Right cardiac atrium (tissue), 5 donors: ENCODE measurements at regions of chr17 and their contacts with region 1.

Region 1: GRCh38 chr17:50919321-50920085 is 53.3 kb upstream of the TOB1 start:
- DNase-seq: peak; percentile 90 to 95 (median 94)
- ATAC-seq: peak; percentile 92 to 95
- H3K4me3 ChIP-seq: no peak overlapping the region
- H3K27ac ChIP-seq: peak overlapping the region; percentile 18
- H3K4me1 ChIP-seq: peaks cover 4% of the 10 kb centered on the region
- H3K27me3 ChIP-seq: no peaks in the 10 kb centered on the region

Region 2: GRCh38 chr17:50719144-50719923 is 200.2 kb before region 1 on chr17 and contains the start of gene LUC7L3:
- intact Hi-C with region 1: no loop called
- DNase-seq: peak; percentile 94 to 98 (median 97)
- ATAC-seq: peak; percentile 98 to 99
- H3K4me3 ChIP-seq: peak within 1 kb of the TSS; percentile 86
- H3K27ac ChIP-seq: peak within 1 kb of the TSS; percentile 97
- H3K4me1 ChIP-seq: peaks cover 4% of the 10 kb centered on the region
- H3K27me3 ChIP-seq: no peaks in the 10 kb centered on the region
- total RNA-seq, gene LUC7L3: 61.7 to 72.4 (median 67.4) TPM

Region 3: GRCh38 chr17:50872710-50873424 is 46.6 kb before region 1 on chr17:
- intact Hi-C with region 1: loop called in 1 of 4 experiments (anchors 10 kb)
- DNase-seq: no peak
- ATAC-seq: peak; percentile 38 to 46
- H3K4me3 ChIP-seq: no peak overlapping the region
- H3K27ac ChIP-seq: no peak overlapping the region
- H3K4me1 ChIP-seq: no peaks in the 10 kb centered on the region
- H3K27me3 ChIP-seq: no peaks in the 10 kb centered on the region

Region 4: DNA sequence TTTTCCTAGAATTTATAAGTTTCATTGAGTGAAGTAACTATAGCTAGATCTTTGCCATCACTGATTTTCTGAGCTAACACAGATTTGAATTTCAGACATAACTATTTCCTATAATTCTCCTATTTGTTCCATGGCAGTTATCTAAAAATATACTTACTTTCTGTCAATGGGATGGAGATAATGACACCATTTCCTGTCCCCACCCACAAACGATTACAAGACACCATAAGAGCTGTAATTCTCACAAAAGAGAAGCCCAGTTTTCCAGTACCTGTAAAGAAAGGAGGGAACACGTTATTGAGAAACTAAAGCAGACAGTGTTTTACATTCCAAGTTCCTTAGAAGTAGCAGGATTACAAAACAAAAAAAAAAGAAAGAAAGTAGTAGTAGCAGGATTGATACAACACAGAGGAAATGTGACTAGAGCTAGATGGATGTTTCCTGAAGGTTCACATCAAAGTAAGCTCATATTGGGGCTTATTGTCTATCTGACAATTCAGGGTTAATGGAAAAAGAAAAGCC is 57.5 kb after region 1 on chr17:
- intact Hi-C with region 1: no loop called
- DNase-seq: no peak
- ATAC-seq: peak in 1 of 2 donors; percentile 63
- H3K4me3 ChIP-seq: no peak overlapping the region
- H3K27ac ChIP-seq: no peak overlapping the region
- H3K4me1 ChIP-seq: no peaks in the 10 kb centered on the region
- H3K27me3 ChIP-seq: no peaks in the 10 kb centered on the region

Region 5: DNA sequence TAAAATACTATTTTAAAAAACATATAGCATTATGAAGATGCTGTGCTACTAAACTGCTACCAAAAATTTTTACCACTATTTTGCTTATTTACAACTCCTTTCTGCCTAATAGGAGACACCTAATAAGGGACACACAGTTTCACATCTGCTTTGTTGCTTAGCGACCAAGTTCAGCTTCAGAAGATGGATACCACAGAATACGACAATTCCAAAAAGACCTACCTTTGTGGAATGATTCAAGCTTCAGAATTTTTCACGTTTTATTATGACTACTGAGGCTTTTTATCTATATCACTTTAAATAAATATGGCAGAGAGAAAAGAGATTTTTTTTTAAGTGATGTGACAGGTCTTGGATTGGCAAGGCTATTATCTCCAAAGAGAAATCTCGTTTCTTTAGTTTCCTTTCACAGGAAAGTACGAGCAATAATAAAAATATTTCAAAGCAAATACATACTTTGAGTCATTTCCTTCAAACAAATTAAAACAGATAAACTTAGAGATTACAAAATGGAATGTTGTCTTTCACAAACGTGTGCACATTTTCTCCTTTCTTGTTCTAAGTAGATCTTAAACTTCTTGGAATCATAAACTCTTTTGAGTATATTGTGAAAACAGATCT is 165.8 kb after region 1 on chr17:
- intact Hi-C with region 1: no loop called
- DNase-seq: no peak
- ATAC-seq: no peak
- H3K4me3 ChIP-seq: no peak overlapping the region
- H3K27ac ChIP-seq: no peak overlapping the region
- H3K4me1 ChIP-seq: no peaks in the 10 kb centered on the region
- H3K27me3 ChIP-seq: no peaks in the 10 kb centered on the region